GM10248 (cell line): ENCODE measurements at regions of chr5 and their contacts with region 1.

Region 1: GRCh38 chr5:134637161-134637582 is 4.5 kb upstream of the SAR1B start:
- DNase-seq: no peak
- CTCF ChIP-seq: no peak

Region 2: DNA sequence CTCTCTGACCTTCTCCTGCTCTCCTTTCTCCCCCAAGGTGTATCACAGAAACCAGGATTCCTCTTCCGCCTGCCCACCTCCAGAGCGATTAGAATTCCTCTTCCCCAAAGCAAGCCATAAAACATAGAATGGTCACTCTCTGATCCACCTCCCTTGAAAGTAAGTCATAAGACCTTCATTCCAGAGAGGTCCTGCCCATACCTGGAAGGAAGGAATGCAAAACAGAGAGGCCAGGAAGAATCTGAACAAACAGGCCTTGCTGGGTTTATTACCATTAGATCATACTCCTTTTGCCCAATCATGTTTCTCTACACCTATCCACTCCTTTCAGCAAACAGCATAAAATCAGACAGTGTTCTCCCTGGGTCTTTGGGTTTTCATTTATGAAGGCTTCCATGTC is 291.2 kb before region 1 on chr5:
- CTCF ChIA-PET with region 1: no interaction called
- POLR2A ChIA-PET with region 1: no interaction called
- DNase-seq: no peak
- CTCF ChIP-seq: no peak

Region 3: GRCh38 chr5:134547579-134547978 is 89.6 kb before region 1 on chr5:
- CTCF ChIA-PET with region 1: no interaction called
- POLR2A ChIA-PET with region 1: no interaction called
- DNase-seq: no peak
- CTCF ChIP-seq: no peak

Region 4: DNA sequence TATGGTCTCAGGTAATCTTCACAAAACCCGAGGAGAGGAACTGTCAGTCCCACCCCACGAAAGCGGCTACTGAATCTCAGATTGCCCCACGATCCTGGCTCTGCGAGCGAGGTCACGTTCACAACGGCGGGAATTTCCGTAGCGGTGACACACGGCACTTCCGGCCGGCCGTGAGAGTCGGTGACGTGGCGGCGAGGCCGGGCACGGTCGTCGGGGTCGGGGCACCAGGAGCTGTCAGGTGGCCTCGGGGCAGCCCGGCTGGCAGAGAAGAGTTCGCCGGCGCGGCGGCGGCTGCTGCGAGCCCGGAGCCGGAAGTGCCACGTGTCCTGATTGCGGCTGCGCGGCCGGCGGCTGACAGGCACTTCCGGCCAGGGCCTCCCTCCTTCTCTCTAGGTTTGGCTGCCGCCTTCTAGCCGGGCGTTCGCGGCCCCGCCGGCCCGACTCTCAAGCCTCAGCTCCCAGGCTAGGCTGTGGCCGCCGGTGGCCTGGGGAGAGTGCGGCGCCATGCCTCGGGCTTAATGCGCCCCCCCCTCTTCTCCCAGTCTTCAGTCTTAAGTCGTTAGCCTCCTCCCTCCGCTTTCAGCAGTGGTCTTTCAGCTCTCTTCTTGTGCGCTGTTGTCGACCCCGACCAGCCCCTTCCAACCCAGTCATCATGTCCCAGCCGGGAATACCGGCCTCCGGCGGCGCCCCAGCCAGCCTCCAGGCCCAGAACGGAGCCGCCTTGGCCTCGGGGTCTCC is 11.4 kb after region 1 on chr5 and contains the start of gene SEC24A:
- CTCF ChIA-PET with region 1: interaction called, 3 read pairs
- POLR2A ChIA-PET with region 1: interaction called, 16 read pairs
- DNase-seq: peak; percentile 95
- CTCF ChIP-seq: no peak